Left ventricle myocardium inferior (tissue), 1 donor: ENCODE measurements at regions of chr5 and their contacts with region 1.

Region 1: GRCh38 chr5:10424124-10424731 is 17.5 kb upstream of the ROPN1L start:
- DNase-seq: no peak
- H3K4me3 ChIP-seq: no peak overlapping the region
- H3K27ac ChIP-seq: no peak overlapping the region
- H3K4me1 ChIP-seq: peaks cover 17% of the 10 kb centered on the region
- H3K27me3 ChIP-seq: no peaks in the 10 kb centered on the region
- CTCF ChIP-seq: peak; percentile 68

Region 2: DNA sequence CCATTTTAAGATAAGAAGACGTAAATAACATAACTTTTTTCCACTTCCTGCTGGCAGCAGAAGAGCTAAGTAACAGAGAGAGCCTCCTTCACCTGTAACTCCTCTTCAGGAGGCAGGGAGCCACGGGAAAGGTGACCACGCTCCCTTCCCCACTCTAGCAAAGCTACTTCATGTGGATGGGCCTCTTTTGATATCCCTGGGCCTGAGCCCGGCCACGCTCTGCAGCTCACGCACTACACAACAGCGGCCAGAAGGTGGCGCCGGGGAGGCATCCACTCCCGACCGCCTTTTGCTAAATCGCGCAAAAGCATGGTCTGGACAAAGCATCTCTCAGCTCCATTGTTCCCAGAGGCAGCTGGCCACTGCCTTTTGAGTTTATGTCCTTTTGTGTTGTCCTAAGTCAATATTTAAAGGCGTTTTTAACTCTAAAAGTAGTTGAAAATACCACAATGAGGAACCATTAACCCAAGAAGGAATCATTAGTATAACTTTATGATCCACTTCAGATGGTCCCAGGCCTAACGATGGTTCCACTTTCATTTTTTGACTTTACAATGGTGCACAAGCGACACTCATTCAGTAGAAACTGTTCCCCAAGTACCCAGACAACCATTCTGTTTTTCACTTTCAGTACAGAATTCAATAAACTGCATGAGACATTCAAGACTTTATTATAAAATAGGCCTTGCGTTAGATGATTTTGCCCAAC is 140.1 kb before region 1 on chr5:
- intact Hi-C with region 1: loop called (anchors 10 kb)
- DNase-seq: peak; percentile 83
- H3K4me3 ChIP-seq: no peak overlapping the region
- H3K27ac ChIP-seq: no peak overlapping the region
- H3K4me1 ChIP-seq: peaks cover 13% of the 10 kb centered on the region
- H3K27me3 ChIP-seq: no peaks in the 10 kb centered on the region
- CTCF ChIP-seq: peak; percentile 98